ENCODE measurements at regions of chr5 and their contacts with region 1.

Region 1: GRCh38 chr5:172006321-172007174 is at the start of gene FBXW11:
- DNase-seq: peak; percentile 98
- ATAC-seq: peak; percentile 94 to 95
- total RNA-seq, gene FBXW11: 50.3 to 55.4 TPM

Region 2: DNA sequence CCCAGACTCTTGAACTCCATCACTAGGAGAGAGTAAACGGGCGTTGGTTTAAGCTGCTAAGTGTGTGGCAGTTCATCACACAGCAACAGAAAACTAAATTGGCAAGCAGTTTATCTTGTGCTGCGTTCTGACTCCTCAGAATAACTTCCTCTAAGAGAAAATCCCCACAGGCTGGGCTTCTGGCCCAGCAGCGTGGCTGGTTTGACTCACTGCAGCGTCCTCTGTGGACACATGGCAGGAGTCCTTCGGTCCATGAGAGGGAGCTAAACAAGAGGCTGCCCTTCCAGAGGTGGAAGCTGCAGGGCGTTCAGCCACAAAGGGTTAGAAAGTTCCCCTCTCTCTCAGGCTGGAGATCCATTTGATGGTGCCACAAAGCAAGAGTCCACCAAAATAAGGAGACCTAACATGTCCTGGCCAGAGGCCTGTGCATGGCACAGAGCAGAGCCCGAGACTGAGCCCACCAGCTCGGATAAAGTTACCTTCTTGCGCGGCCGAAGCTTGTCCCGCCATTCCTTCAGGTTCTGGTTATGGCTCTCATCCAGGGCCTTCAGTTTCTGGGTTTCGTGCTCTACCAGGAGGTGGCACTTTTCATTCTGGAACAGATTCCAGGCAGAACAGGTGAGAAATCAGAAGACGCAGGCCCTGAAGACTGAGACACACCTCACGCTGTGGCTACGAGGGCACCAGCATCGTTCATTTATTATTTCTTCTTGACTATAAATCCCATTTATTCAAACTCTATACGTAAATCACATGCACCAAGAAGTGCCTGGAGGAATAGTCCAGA is 46.1 kb after region 1 on chr5:
- intact Hi-C with region 1: loop called in 1 of 2 experiments (anchors 5 kb)
- DNase-seq: peak; percentile 82
- ATAC-seq: peak; percentile 95 to 97

Measured in left cardiac atrium (tissue), 4 donors.